ENCODE measurements at regions of chr2 and their contacts with region 1.

Region 1: DNA sequence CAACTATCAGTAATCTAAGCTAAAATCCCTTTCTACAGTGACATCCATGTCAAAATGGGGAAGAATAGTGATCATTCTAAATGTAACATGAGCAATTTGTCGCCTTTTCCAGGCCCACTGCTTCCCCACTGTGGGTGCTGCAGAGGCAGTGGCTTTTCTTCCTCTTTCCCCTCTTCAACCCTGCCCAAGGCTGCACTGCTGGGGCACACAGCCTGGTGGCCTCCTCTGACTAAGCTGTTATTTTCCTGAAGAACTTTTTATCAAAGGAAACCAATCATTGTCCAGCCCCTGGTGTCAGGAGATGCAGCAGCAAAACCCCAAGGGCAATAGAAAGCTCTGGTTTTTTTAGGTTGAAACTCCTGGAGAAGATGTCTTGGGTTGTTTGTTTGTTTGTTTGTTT is 117.6 kb upstream of the KLF7 start:
- DNase-seq: peak; percentile 64
- H3K4me3 Mint-ChIP-seq: peak overlapping the region; percentile 51
- H3K27ac Mint-ChIP-seq: peak overlapping the region; percentile 84
- H3K4me1 Mint-ChIP-seq: peaks cover 46% of the 10 kb centered on the region
- H3K27me3 Mint-ChIP-seq: no peaks in the 10 kb centered on the region

Region 2: DNA sequence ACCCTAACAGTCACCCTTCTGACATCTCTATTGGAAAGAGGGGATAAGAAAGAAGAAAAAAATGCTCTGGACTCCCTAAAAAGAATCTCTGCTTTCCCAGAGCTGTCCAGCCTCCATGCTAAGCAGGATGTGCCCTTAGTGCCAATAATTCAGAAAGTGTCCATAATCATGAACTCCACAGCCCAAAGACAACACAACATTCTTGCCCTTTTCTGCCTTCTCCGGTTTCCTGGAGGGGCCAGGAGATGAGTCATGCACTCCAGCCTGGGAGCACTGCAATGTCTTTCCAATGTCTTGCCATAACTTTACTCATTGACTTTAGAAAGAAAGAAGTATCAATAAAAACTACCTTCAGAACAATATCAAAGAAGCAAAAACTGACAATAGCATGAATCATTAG is 161.6 kb before region 1 on chr2:
- intact Hi-C with region 1: loop called (anchors 5 kb)
- DNase-seq: no peak
- H3K4me3 Mint-ChIP-seq: no peak overlapping the region
- H3K27ac Mint-ChIP-seq: no peak overlapping the region
- H3K4me1 Mint-ChIP-seq: peaks cover 38% of the 10 kb centered on the region
- H3K27me3 Mint-ChIP-seq: no peaks in the 10 kb centered on the region

Region 3: GRCh38 chr2:207223051-207223450 is 60.3 kb before region 1 on chr2:
- intact Hi-C with region 1: loop called (anchors 1 kb)
- DNase-seq: peak; percentile 59
- H3K4me3 Mint-ChIP-seq: no peak overlapping the region
- H3K27ac Mint-ChIP-seq: peak overlapping the region; percentile 59
- H3K4me1 Mint-ChIP-seq: peaks cover 35% of the 10 kb centered on the region
- H3K27me3 Mint-ChIP-seq: peaks cover 6% of the 10 kb centered on the region

Region 4: DNA sequence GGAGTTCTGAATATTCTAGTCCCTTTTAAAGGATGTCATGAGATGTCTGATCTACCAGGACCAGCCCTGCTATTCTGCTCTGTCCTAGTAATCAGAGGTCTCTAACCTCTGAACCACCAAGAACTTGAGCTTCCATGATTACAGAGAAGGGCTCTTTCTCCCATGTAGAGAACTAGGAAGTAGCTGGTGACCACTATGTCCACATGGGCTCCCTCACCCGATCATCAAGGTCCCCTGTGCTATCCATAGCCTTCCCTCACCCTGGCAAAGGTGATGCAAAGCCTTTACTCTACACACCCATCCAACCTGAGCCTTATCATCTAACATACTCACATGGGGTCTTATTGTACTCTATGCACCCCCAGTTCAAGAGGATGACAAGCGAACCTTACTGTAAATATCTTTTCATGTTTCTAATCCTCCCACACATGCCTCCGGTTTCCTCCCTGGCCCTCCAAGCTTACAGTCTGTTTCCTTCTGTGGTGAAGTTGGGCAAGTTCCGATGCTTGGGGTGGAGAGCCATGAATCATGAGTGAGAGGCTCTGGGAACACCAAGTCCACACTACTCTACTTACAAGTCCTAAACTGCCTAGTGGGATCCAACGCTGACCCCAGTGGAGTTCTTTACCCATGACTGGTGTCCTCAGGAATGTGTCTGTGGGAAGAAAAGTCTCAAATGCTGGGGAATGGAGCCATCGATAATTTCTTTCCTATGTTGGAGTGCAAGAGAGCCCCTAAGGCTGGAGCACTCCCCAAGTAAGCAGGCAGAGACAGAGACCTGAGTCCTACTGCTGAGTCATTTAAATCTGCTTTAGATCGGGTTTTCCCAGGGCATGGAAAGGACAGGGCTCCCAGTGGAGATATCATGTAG is 44.3 kb before region 1 on chr2:
- intact Hi-C with region 1: loop called (anchors 1 kb)
- DNase-seq: peak; percentile 73
- H3K4me3 Mint-ChIP-seq: peak overlapping the region; percentile 49
- H3K27ac Mint-ChIP-seq: peak overlapping the region; percentile 76
- H3K4me1 Mint-ChIP-seq: peaks cover 42% of the 10 kb centered on the region
- H3K27me3 Mint-ChIP-seq: no peaks in the 10 kb centered on the region

Region 5: GRCh38 chr2:207265869-207266268 is 17.5 kb before region 1 on chr2:
- intact Hi-C with region 1: no loop called
- DNase-seq: no peak
- H3K4me3 Mint-ChIP-seq: no peak overlapping the region
- H3K27ac Mint-ChIP-seq: no peak overlapping the region
- H3K4me1 Mint-ChIP-seq: peaks cover 7% of the 10 kb centered on the region
- H3K27me3 Mint-ChIP-seq: no peaks in the 10 kb centered on the region

Region 6: GRCh38 chr2:207311316-207312005 is 28.1 kb after region 1 on chr2:
- intact Hi-C with region 1: loop called (anchors 1 kb)
- DNase-seq: peak; percentile 74
- H3K4me3 Mint-ChIP-seq: peak overlapping the region; percentile 28
- H3K27ac Mint-ChIP-seq: peak overlapping the region; percentile 64
- H3K4me1 Mint-ChIP-seq: peaks cover 36% of the 10 kb centered on the region
- H3K27me3 Mint-ChIP-seq: no peaks in the 10 kb centered on the region

Region 7: DNA sequence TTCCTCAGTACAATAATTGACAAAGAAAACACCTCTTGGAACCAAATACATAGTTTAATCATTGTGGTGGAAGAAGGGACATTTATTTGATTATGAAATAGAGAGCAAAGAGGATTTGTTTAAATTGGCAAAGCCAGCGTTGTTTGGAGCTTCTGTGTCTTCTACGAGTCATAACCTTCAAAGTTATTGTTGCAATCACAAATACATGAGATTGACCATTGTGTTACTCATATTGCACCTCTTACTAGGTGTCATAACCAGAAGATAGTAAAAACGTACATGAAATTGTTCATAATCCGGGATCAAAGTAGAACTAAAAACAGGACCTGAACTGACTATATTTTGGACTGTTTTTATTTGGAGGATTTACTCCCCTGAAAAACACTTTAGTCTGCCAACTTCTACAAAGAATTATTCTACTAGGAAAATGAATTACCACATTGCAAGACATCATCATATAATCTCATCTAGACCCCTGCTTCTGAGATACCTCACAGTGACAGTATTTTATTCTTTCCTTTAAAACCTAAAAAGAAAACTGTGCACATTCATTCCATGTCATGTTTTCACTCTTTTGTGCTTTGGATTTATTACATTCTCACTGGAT is 34.1 kb after region 1 on chr2:
- intact Hi-C with region 1: loop called (anchors 1 kb)
- DNase-seq: no peak
- H3K4me3 Mint-ChIP-seq: peak overlapping the region; percentile 4
- H3K27ac Mint-ChIP-seq: peak overlapping the region; percentile 57
- H3K4me1 Mint-ChIP-seq: peaks cover 31% of the 10 kb centered on the region
- H3K27me3 Mint-ChIP-seq: no peaks in the 10 kb centered on the region

Measured in activated CD4-positive, alpha-beta T cell treated with anti-CD3 and anti-CD28 coated beads, Interleukin-2, amount 10 ng/mL, durations not matched to agents 24 days and 14 days (primary cell).